ENCODE measurements at regions of chr1 and their contacts with region 1.

Region 1: DNA sequence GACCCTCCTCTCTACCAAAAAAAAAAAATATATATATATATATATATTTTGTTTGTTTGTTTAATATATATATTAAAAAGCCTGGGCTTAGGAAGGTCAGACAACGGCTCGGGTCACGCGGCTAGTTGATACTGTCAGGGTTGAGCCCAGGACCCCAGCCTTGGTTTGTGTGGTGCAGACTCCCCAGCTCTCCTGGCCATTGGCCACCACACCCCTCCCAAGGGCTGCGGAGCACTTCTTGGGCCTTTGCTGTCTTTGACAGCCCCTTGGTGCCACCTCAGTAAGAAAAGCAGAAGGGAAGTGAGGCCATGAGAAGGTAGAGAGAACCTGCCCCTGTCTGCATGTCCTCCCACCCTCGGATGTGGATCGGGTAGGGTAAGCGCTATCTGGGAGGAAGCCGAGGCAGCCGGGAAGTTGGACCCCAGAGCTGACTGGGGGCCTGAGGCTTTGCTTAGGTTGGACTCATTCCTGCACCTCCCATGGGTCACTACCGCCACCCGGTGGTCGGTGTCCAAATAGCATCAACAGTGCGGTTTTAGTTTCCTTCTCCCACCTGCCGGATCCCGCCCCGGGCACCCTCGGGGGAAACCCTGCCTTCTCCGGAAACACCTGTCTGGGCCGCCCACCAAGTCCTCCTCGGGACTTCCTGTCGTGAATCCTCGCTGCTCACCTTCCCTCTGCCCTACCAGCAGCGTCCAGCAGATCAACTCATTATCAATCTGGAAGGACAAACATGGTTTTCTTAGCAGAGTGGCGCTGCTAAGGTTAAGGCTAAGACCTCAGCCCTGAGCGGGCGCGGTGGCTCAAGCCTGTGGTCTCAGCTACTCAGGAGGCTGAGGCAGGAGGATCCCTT is 29.8 kb upstream of the GNPAT start:
- DNase-seq: peak; percentile 58 to 95 (median 86)

Region 2: GRCh38 chr1:230797942-230798418 is 413.3 kb before region 1 on chr1:
- intact Hi-C with region 1: loop called (anchors 10 kb)
- DNase-seq: peak; percentile 50 to 92 (median 78)

Region 3: GRCh38 chr1:230937371-230937770 is 273.9 kb before region 1 on chr1:
- intact Hi-C with region 1: loop called (anchors 10 kb)
- DNase-seq: no peak

Region 4: DNA sequence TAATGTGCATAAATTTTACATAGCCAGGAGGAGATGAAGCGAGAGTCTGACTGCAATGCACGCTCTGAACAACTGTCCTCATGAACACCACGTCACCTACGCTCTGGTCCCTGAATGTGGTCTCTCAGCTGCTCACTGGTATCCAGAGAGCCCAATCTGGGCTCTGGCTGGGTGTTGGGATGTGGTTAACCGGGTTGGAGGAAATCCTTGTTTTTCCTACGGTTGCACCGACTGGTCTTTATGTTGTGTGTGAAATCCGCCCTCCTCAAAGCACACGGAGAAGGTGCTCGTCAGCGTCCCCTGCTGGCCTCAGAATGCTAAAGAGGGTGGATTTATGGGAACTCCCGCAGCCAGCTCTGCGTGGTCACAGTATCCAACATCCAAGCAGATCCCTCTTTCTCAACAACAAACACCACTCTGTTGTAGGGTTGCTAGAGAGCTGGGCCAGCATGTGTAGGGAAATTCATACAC is 119.4 kb before region 1 on chr1:
- intact Hi-C with region 1: loop called (anchors 5 kb)
- DNase-seq: peak in 5 of 42 donors; percentile 5 to 45 (median 15)